Caco-2 (cell line): ENCODE measurements at regions of chr17 and their contacts with region 1.

Region 1: GRCh38 chr17:81911277-81911961 is at the start of gene PCYT2:
- DNase-seq: peak; percentile 97 to 98
- H3K4me3 ChIP-seq: peak within 1 kb of the TSS; percentile 99
- H3K4me3 Mint-ChIP-seq: peak within 1 kb of the TSS; percentile 89
- H3K27ac Mint-ChIP-seq: peak within 1 kb of the TSS; percentile 94
- H3K4me1 ChIP-seq: peaks cover 19% of the 10 kb centered on the region
- H3K4me1 Mint-ChIP-seq: peaks cover 19% of the 10 kb centered on the region
- H3K27me3 ChIP-seq: no peaks in the 10 kb centered on the region
- H3K27me3 Mint-ChIP-seq: no peaks in the 10 kb centered on the region
- CTCF ChIP-seq: peak; percentile 31 to 45
- total RNA-seq, gene PCYT2: 125 and 151 TPM in 2 replicates

Region 2: DNA sequence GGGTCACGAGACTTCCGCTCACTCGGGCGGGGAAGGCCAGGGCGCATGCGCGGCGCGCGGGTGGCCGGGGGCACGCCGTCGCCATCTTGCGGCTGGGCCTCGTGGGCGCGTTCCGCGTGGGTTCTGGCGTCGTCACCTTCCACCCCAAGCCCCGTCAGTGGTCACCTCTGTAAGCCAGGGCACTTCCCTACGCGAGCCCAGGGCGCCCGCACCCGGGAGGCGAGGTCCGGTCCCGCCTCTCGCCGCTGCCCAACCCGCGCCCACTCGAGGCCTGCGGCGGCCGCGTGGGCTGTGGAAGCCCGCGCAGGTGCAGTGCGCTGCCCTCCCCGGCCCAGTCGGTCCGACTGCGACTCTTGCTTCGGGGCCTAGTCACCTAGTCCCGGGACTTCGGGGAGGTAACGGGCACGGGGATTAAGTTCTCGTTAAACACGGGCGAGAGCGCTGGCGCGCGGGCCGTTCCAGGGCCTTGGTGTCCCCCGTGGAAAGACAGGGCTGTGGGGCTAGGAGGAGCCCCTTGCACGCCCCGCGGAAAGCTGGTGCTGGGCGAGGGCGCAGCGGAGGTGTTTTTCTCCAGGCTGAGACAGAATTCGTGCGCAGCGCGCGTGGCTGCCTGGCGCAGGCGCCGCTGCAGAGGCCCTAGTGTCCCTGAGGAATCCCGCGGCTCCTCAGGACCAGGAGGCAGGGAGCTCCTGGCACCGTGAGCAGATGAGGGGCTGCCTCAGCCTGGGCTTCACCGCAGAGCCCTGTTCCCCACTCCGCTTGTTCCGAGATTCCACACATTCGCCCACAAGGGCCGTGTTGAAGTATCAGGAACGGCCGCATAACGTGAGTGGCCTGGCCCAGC is 39.8 kb before region 1 on chr17:
- CTCF ChIA-PET with region 1: no interaction called
- POLR2A ChIA-PET with region 1: no interaction called
- intact Hi-C with region 1: no loop called
- DNase-seq: peak; percentile 58 to 97
- H3K4me3 ChIP-seq: peak overlapping the region; percentile 81
- H3K4me3 Mint-ChIP-seq: peak overlapping the region; percentile 78
- H3K27ac Mint-ChIP-seq: peak overlapping the region; percentile 87
- H3K4me1 ChIP-seq: peaks cover 43% of the 10 kb centered on the region
- H3K4me1 Mint-ChIP-seq: peaks cover 16% of the 10 kb centered on the region
- H3K27me3 ChIP-seq: no peaks in the 10 kb centered on the region
- H3K27me3 Mint-ChIP-seq: no peaks in the 10 kb centered on the region
- CTCF ChIP-seq: peak; percentile 26 to 52

Region 3: GRCh38 chr17:81890447-81891299 is 20.7 kb before region 1 on chr17:
- CTCF ChIA-PET with region 1: interaction called, 4 read pairs
- POLR2A ChIA-PET with region 1: interaction called, 4 read pairs
- intact Hi-C with region 1: loop called (anchors 1 kb)
- DNase-seq: no peak
- H3K4me3 ChIP-seq: peak overlapping the region; percentile 81
- H3K4me3 Mint-ChIP-seq: peak overlapping the region; percentile 91
- H3K27ac Mint-ChIP-seq: peak overlapping the region; percentile 99
- H3K4me1 ChIP-seq: peaks cover 11% of the 10 kb centered on the region
- H3K4me1 Mint-ChIP-seq: no peaks in the 10 kb centered on the region
- H3K27me3 ChIP-seq: no peaks in the 10 kb centered on the region
- H3K27me3 Mint-ChIP-seq: no peaks in the 10 kb centered on the region
- CTCF ChIP-seq: no peak

Region 4: DNA sequence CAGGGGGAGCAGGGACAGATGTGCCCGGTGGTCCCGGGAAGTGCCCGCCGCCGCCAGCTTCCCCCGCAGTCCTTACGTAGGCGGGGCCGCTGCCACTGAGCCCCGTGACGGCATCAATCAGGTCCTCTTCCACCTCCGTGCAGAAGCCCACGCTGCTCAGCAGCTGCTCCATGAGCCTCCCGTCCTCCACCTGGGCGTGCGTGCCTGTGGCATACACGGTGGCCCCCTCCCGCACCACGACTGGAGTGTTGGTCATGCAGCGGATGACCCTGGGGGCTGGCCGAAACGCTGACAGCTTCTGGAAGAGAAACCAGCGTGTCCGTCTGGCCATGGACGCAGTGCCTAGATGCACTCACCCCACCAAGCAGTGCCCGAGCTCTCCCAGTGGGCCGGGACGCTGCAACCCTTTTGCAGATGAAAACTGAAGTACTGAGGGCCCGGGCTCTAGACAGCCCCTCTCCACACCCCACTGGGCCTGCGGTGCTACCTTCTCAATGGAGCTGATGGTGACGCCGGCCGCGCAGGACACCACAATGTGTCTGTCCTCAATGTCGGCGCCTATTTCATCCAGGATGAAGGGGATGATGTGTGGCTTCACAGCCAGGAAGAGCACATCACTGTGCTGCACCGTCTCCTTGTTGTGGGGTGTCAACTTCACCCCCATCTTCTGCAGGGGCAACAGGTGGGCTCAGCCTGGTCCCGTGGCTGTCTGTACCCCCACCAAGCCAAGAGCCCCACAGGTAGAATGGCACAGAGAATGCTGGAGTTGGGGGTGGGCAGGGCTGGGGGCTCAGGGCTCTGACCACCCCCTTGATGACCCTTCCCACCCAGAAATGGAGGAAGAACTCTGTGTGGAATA is 23.7 kb after region 1 on chr17:
- CTCF ChIA-PET with region 1: no interaction called
- POLR2A ChIA-PET with region 1: no interaction called
- intact Hi-C with region 1: no loop called
- DNase-seq: no peak
- H3K4me3 ChIP-seq: no peak overlapping the region
- H3K4me3 Mint-ChIP-seq: peak overlapping the region; percentile 94
- H3K27ac Mint-ChIP-seq: no peak overlapping the region
- H3K4me1 ChIP-seq: no peaks in the 10 kb centered on the region
- H3K4me1 Mint-ChIP-seq: peaks cover 12% of the 10 kb centered on the region
- H3K27me3 ChIP-seq: no peaks in the 10 kb centered on the region
- H3K27me3 Mint-ChIP-seq: no peaks in the 10 kb centered on the region
- CTCF ChIP-seq: no peak

Region 5: GRCh38 chr17:82008941-82009405 is 97.6 kb after region 1 on chr17:
- CTCF ChIA-PET with region 1: no interaction called
- POLR2A ChIA-PET with region 1: no interaction called
- intact Hi-C with region 1: no loop called
- DNase-seq: no peak
- H3K4me3 ChIP-seq: no peak overlapping the region
- H3K4me3 Mint-ChIP-seq: no peak overlapping the region
- H3K27ac Mint-ChIP-seq: no peak overlapping the region
- H3K4me1 ChIP-seq: peaks cover 8% of the 10 kb centered on the region; the same call in 1 of the 2 replicates
- H3K4me1 Mint-ChIP-seq: no peaks in the 10 kb centered on the region
- H3K27me3 ChIP-seq: no peaks in the 10 kb centered on the region
- H3K27me3 Mint-ChIP-seq: no peaks in the 10 kb centered on the region
- CTCF ChIP-seq: no peak